Activated B cell treated with CpG ODN at 0.5 μM for 24 hours (primary cell): ENCODE measurements at regions of chr6 and their contacts with region 1.

Region 1: GRCh38 chr6:137370871-137371633 is 123.1 kb downstream of the OLIG3 start:
- DNase-seq: no peak
- ATAC-seq: peak; percentile 64
- H3K4me3 Mint-ChIP-seq: peak overlapping the region; percentile 53
- H3K27ac Mint-ChIP-seq: peak overlapping the region; percentile 71
- H3K4me1 Mint-ChIP-seq: peaks cover 31% of the 10 kb centered on the region
- H3K27me3 Mint-ChIP-seq: no peaks in the 10 kb centered on the region
- CTCF ChIP-seq: no peak

Region 2: DNA sequence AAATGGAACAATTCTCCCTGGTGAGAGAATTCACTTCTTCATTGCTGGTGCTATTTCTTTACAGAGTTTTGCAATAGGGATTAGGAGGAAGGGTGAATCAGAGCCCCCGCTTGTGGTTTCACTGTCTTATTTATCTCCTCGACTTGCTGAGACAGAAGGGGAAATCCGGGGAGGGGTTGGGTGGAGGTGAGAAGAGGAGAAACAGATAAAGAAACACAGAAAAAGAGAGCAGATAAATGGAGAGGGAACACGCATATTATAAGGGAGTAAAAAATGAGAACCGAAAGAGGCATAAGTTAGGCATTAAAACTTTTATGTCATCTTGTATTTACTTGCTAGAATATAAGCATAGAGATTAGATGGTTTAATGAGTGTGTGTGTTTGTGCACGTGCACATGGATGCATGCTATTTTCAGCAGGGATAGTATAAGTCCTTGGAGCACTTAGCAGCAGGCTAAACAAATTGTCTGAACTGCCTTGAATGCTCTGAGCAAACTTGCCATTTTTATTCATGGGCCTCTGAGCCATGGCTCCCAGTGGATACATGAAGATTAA is 18.2 kb after region 1 on chr6:
- CTCF ChIA-PET with region 1: no interaction called
- POLR2A ChIA-PET with region 1: interaction called, 3 read pairs
- intact Hi-C with region 1: loop called (anchors 2 kb)
- DNase-seq: no peak
- ATAC-seq: peak; percentile 93
- H3K4me3 Mint-ChIP-seq: peak overlapping the region; percentile 65
- H3K27ac Mint-ChIP-seq: peak overlapping the region; percentile 73
- H3K4me1 Mint-ChIP-seq: peaks cover 26% of the 10 kb centered on the region
- H3K27me3 Mint-ChIP-seq: no peaks in the 10 kb centered on the region
- CTCF ChIP-seq: no peak

Region 3: GRCh38 chr6:138468316-138469008 is 1097.4 kb after region 1 on chr6:
- CTCF ChIA-PET with region 1: no interaction called
- POLR2A ChIA-PET with region 1: no interaction called
- intact Hi-C with region 1: no loop called
- DNase-seq: no peak
- ATAC-seq: no peak
- H3K4me3 Mint-ChIP-seq: no peak overlapping the region
- H3K27ac Mint-ChIP-seq: no peak overlapping the region
- H3K4me1 Mint-ChIP-seq: no peaks in the 10 kb centered on the region
- H3K27me3 Mint-ChIP-seq: peaks cover 4% of the 10 kb centered on the region
- CTCF ChIP-seq: no peak